Natural killer cell (primary cell): ENCODE measurements at regions of chr2 and their contacts with region 1.

Region 1: GRCh38 chr2:37549598-37549997 is 121.8 kb downstream of the CDC42EP3 start:
- DNase-seq: no peak
- ATAC-seq: no peak
- H3K4me3 ChIP-seq: no peak overlapping the region
- H3K4me3 Mint-ChIP-seq: no peak overlapping the region
- H3K27ac ChIP-seq: no peak overlapping the region
- H3K27ac Mint-ChIP-seq: no peak overlapping the region
- H3K4me1 ChIP-seq: no peaks in the 10 kb centered on the region
- H3K4me1 Mint-ChIP-seq: peaks cover 16 to 31% of the 10 kb centered on the region in 2 donors
- H3K27me3 ChIP-seq: no peaks in the 10 kb centered on the region
- H3K27me3 Mint-ChIP-seq: no peaks in the 10 kb centered on the region
- CTCF ChIP-seq: no peak

Region 2: DNA sequence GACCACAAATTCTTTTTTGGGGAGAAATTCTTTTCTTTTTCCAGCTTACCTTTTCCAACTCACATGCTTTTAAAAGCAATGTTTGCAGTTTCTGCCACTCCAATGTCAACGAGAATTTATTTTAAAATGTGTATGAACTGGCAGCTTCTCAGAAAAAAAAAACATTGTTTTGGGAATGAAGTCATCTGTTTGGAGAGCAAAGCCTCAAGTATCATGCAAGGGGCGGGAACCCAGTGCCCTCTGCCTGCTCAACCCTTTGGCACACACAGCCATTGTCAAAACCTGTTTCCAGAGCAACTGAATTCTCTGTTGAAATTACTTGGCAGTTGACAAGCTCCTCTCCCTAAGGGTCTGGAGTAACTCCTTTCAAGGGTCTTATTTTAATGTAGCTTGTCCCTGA is 76.6 kb before region 1 on chr2:
- intact Hi-C with region 1: no loop called
- DNase-seq: no peak
- ATAC-seq: no peak
- H3K4me3 ChIP-seq: no peak overlapping the region
- H3K4me3 Mint-ChIP-seq: no peak overlapping the region
- H3K27ac ChIP-seq: no peak overlapping the region
- H3K27ac Mint-ChIP-seq: no peak overlapping the region
- H3K4me1 ChIP-seq: no peaks in the 10 kb centered on the region
- H3K4me1 Mint-ChIP-seq: peaks cover 4 to 21% of the 10 kb centered on the region in 2 donors
- H3K27me3 ChIP-seq: no peaks in the 10 kb centered on the region
- H3K27me3 Mint-ChIP-seq: peaks cover 0 to 2% of the 10 kb centered on the region in 2 donors
- CTCF ChIP-seq: no peak

Region 3: DNA sequence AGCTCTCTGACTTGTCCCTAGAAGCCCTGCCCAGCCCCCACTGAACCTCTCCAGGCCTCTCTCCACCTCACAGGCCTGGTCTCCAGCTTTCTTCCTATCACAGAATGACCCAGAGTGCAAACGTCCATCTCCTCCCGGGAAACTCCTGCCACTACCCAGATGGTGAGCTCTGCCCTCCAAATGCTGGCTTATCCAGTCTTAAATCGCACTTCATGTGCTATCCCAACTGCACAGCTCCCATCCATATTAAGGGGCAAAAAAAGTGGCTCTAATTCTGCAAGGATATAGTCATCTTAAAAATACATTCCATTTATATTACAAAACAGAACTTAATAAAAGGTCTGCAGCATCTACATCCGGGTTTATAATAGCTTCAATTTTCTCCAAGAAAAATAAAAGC is 192.7 kb after region 1 on chr2:
- intact Hi-C with region 1: no loop called
- DNase-seq: no peak
- ATAC-seq: no peak
- H3K4me3 ChIP-seq: no peak overlapping the region
- H3K4me3 Mint-ChIP-seq: no peak overlapping the region
- H3K27ac ChIP-seq: no peak overlapping the region
- H3K27ac Mint-ChIP-seq: peak overlapping the region in 1 of 2 donors; percentile 34
- H3K4me1 ChIP-seq: no peaks in the 10 kb centered on the region
- H3K4me1 Mint-ChIP-seq: peaks cover 6 to 13% of the 10 kb centered on the region in 2 donors
- H3K27me3 ChIP-seq: no peaks in the 10 kb centered on the region
- H3K27me3 Mint-ChIP-seq: no peaks in the 10 kb centered on the region
- CTCF ChIP-seq: no peak

Region 4: GRCh38 chr2:37809525-37809924 is 259.9 kb after region 1 on chr2:
- intact Hi-C with region 1: loop called (anchors 1 kb)
- DNase-seq: peak in 1 of 2 donors; percentile 37
- ATAC-seq: no peak
- H3K4me3 ChIP-seq: no peak overlapping the region
- H3K4me3 Mint-ChIP-seq: no peak overlapping the region
- H3K27ac ChIP-seq: no peak overlapping the region
- H3K27ac Mint-ChIP-seq: no peak overlapping the region
- H3K4me1 ChIP-seq: no peaks in the 10 kb centered on the region
- H3K4me1 Mint-ChIP-seq: peaks cover 10 to 12% of the 10 kb centered on the region in 2 donors
- H3K27me3 ChIP-seq: no peaks in the 10 kb centered on the region
- H3K27me3 Mint-ChIP-seq: peaks cover 0 to 7% of the 10 kb centered on the region in 2 donors
- CTCF ChIP-seq: no peak

Region 5: DNA sequence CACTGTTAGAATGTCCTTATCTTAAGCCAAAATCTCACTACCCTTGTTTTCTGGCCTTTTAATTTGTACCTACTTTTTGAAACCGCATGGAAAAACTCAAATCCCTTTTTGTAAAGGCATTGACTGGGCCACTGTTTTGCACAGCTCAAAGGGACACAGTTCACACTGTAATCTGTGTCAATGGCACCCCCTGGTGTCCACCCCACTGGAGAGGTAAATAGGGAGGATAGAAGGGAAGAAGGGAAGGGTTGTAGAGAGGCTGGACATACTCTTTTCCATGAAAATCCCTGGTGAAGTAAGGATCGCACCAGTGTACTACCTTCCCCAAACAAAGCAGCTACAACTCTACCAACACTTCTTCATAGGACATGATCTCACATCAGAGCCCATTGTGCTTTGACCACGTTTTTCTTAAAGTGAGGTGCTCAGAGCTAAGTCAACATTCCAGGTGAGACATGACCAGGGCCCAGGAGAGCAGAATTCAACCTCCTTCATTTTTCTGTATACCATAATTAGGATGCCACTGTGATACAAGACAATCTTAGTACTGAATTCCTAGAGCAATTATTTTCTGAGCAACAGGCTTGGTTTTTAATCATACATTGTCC is 283.1 kb after region 1 on chr2:
- intact Hi-C with region 1: loop called (anchors 1 kb)
- DNase-seq: peak; percentile 72 to 88
- ATAC-seq: peak; percentile 83 to 96 (median 94)
- H3K4me3 ChIP-seq: no peak overlapping the region
- H3K4me3 Mint-ChIP-seq: no peak overlapping the region
- H3K27ac ChIP-seq: no peak overlapping the region
- H3K27ac Mint-ChIP-seq: no peak overlapping the region
- H3K4me1 ChIP-seq: peaks cover 9% of the 10 kb centered on the region
- H3K4me1 Mint-ChIP-seq: peaks cover 12 to 21% of the 10 kb centered on the region in 2 donors
- H3K27me3 ChIP-seq: no peaks in the 10 kb centered on the region
- H3K27me3 Mint-ChIP-seq: no peaks in the 10 kb centered on the region
- CTCF ChIP-seq: peak; percentile 92